Activated B cell treated with CpG ODN at 0.5 μM for 24 hours (primary cell): ENCODE measurements at regions of chr10 and their contacts with region 1.

Region 1: DNA sequence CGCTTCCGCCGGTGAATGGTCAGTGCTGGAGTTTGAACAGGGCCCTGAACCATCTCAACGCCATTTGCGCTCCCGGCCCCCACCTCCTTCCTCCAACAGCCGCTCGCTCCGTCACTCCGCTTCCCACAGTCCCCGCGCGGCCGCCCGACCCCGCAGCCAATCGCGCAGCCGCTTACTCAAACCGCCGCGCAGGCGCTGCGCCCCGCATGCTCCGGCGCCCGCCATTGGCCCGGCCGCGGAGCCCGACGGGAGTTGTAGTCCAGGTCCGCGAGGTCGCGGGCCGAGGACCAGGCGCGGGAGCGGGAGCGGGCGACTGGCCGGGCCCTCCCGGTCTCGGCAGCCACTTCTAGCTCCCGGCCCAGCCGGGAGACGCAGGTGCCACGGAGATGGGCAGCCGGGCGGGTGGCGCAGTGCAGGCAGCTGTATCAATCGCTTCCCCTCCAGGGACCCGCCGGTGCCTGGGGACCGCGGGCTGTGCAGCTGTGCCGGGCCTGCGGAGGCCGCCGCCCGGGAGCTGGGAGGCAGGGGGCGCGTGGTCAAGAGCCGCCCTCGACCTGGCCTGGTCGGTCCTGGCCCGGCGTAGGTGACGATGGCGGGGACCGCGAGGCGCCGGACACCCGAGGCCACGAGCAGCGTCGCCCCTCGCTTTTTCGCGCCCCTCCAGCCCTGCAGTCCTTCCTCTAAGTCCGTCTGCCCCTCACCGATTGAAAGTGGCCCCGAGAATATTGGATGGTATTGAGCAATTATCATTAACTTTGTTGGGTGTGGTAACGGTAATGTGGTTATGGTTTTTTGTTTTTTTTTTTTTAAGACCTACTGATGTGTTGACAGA is at the start of gene WAPL:
- DNase-seq: peak; percentile 94
- ATAC-seq: peak; percentile 91
- H3K4me3 Mint-ChIP-seq: peak within 1 kb of the TSS; percentile 92
- H3K27ac Mint-ChIP-seq: peak within 1 kb of the TSS; percentile 80
- H3K4me1 Mint-ChIP-seq: peaks cover 41% of the 10 kb centered on the region
- H3K27me3 Mint-ChIP-seq: peaks cover 5% of the 10 kb centered on the region
- CTCF ChIP-seq: no peak
- total RNA-seq, gene WAPL: 35.9 and 38.5 TPM in 2 replicates

Region 2: DNA sequence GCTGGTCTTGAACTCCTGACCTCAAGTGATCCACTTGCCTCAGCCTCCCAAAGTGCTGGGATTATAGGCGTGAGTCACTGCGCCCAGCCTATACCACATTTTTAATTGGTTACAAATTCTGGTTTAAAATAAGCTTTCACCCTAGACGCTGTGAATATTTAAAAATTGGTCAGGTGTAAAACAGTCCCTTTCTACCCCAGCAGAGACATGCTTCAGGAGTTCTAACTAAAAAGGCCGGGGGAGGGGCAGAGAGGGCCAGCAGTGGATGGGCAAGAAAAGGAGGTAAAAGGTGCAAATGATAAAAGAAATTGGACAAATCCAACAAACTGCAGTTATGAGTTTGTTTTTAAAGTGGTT is 70.3 kb before region 1 on chr10:
- CTCF ChIA-PET with region 1: no interaction called
- POLR2A ChIA-PET with region 1: no interaction called
- intact Hi-C with region 1: loop called (anchors 5 kb)
- DNase-seq: no peak
- ATAC-seq: peak; percentile 31
- H3K4me3 Mint-ChIP-seq: no peak overlapping the region
- H3K27ac Mint-ChIP-seq: no peak overlapping the region
- H3K4me1 Mint-ChIP-seq: peaks cover 41% of the 10 kb centered on the region
- H3K27me3 Mint-ChIP-seq: no peaks in the 10 kb centered on the region
- CTCF ChIP-seq: no peak

Region 3: GRCh38 chr10:86535057-86535882 is 13.4 kb after region 1 on chr10:
- CTCF ChIA-PET with region 1: no interaction called
- POLR2A ChIA-PET with region 1: interaction called, 4 read pairs
- intact Hi-C with region 1: loop called (anchors 1 kb)
- DNase-seq: peak; percentile 41
- ATAC-seq: peak; percentile 85
- H3K4me3 Mint-ChIP-seq: peak overlapping the region; percentile 83
- H3K27ac Mint-ChIP-seq: peak overlapping the region; percentile 68
- H3K4me1 Mint-ChIP-seq: peaks cover 13% of the 10 kb centered on the region
- H3K27me3 Mint-ChIP-seq: peaks cover 3% of the 10 kb centered on the region
- CTCF ChIP-seq: no peak

Region 4: DNA sequence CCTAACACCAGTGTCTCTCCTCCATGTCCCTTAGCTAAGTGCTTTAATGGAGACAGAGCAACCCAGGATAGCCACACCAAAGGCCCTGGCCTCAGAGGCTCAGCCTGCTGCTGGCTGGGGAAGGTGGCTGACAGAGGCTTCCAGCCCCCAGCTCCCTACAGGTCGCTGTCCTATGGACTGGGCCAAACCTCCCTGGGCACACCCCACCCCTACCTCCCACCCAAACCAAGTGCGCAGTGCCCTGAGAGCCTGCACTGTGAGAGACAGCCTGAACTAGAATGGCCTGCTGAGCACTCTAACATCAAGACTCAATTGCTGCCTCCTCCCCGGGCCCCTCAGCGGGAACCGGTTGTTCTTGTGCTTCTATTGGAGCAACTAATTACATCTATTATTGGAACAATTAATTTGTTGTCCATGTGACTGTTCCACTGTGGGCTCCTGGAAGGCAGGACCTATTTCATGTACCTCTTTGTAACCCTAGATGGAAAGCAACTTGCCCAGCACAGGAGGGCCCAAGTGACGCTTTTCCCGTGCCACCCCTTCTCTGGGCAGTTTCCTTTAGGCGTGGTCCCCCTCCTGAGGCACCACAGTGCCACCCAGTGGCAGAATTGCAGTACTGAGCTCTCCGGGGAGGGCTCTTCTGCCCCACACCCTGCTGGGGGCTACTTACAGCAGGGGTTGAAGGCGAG is 63.3 kb after region 1 on chr10:
- CTCF ChIA-PET with region 1: no interaction called
- POLR2A ChIA-PET with region 1: interaction called, 5 read pairs
- intact Hi-C with region 1: loop called (anchors 1 kb)
- DNase-seq: peak; percentile 67
- ATAC-seq: peak; percentile 97
- H3K4me3 Mint-ChIP-seq: no peak overlapping the region
- H3K27ac Mint-ChIP-seq: no peak overlapping the region
- H3K4me1 Mint-ChIP-seq: no peaks in the 10 kb centered on the region
- H3K27me3 Mint-ChIP-seq: peaks cover 10% of the 10 kb centered on the region
- CTCF ChIP-seq: peak; percentile 62

Region 5: GRCh38 chr10:86971232-86971991 is 449.5 kb after region 1 on chr10:
- CTCF ChIA-PET with region 1: no interaction called
- POLR2A ChIA-PET with region 1: no interaction called
- intact Hi-C with region 1: loop called (anchors 5 kb)
- DNase-seq: peak; percentile 91
- ATAC-seq: peak; percentile 88
- H3K4me3 Mint-ChIP-seq: peak overlapping the region; percentile 87
- H3K27ac Mint-ChIP-seq: peak overlapping the region; percentile 86
- H3K4me1 Mint-ChIP-seq: peaks cover 26% of the 10 kb centered on the region
- H3K27me3 Mint-ChIP-seq: peaks cover 4% of the 10 kb centered on the region
- CTCF ChIP-seq: no peak

Region 6: GRCh38 chr10:87094373-87095235 is 572.7 kb after region 1 on chr10 and contains the starts of genes GLUD1 and SHLD2:
- CTCF ChIA-PET with region 1: no interaction called
- POLR2A ChIA-PET with region 1: no interaction called
- intact Hi-C with region 1: loop called (anchors 10 kb)
- DNase-seq: peak; percentile 89
- ATAC-seq: peak; percentile 76
- H3K4me3 Mint-ChIP-seq: peak within 1 kb of the TSS; percentile 92
- H3K27ac Mint-ChIP-seq: peak within 1 kb of the TSS; percentile 91
- H3K4me1 Mint-ChIP-seq: peaks cover 42% of the 10 kb centered on the region
- H3K27me3 Mint-ChIP-seq: no peaks in the 10 kb centered on the region
- CTCF ChIP-seq: no peak
- total RNA-seq, gene GLUD1: 96.5 and 98.4 TPM in 2 replicates
- total RNA-seq, gene SHLD2: 29.3 and 29.6 TPM in 2 replicates